Naive thymus-derived CD4-positive, alpha-beta T cell (primary cell): ENCODE measurements at regions of chr2 and their contacts with region 1.

Region 1: DNA sequence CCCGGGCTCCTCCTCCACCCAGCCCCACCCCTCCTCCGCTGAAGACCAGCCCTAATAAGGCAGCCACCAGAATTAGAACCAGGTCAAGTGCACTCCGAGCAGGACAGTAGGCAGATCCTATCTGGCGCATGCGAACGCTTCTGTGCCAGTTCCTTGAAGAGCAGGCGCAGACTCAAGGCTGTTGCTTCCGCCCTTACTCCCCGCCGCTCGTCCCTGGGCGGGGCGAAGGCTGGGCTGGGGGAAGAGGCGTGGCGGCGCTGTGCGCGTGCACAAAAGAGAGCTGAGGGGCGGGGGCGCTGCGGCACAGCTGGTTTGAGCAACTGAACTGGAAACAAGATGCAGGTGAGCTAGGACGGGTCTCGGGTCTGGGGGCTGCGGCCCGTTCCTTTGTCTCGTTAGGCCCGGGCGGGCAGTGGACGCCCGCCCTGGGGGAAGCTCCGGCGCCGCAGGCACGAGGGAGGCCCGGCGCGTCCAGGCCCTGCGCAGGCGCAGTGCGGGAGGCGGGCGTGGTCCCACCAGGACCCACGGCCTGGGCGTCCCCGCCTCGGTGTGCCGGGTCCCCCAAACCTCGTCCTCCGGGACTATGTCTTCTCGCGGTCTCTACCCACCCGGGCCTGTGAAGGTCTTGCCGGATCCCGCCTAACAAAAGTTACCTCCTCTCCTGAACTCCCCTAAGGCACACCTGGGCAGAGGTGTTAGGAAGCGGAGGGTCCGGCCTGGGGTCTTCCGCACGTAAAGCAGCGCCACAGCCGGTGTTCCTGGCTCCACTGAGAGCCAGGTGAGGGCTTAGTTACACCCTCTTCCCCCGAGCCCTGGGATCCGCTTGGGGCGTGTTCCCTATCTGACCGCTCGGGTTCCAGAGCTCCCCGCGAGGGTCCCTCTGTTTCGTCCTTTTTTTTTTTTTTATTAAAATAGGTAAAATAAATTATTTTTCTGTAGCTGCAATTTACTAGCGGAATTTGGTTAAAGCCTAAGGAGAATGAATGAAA is at the start of gene PDCL3:
- DNase-seq: peak; percentile 91 to 97 (median 96)
- ATAC-seq: peak; percentile 94
- H3K4me3 ChIP-seq: peak within 1 kb of the TSS; percentile 99
- H3K4me3 Mint-ChIP-seq: peak within 1 kb of the TSS; percentile 85 to 100 (median 97)
- H3K27ac ChIP-seq: peak within 1 kb of the TSS; percentile 78
- H3K27ac Mint-ChIP-seq: peak within 1 kb of the TSS; percentile 97 to 99 (median 99)
- H3K4me1 ChIP-seq: peaks cover 15 to 16% of the 10 kb centered on the region in 2 donors
- H3K4me1 Mint-ChIP-seq: peaks cover 14 to 64% (median 52%) of the 10 kb centered on the region in 7 donors
- H3K27me3 ChIP-seq: no peaks in the 10 kb centered on the region
- H3K27me3 Mint-ChIP-seq: peaks cover 0 to 2% (median 0%) of the 10 kb centered on the region in 5 donors
- total RNA-seq, gene PDCL3: 16.6 to 31.9 (median 19.9) TPM

Region 2: DNA sequence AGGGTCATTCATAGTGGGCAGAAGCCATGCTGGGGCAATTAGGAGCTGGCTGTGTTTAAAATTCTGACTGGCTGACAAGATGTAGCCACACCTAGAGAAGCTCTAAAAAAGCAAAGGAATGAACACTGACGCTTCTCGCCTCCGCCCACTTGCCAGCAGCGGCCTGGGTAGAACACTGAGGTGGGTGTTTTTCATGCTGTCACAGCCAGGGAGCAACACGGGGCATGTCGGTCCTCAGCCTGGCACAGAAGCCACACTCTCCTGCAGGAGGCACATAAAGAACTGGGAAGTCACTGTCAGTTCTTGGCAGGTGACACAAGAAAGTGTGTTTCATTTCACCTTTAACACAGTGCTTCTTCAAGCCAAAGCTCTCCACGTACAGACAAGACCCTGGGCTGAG is 155.9 kb before region 1 on chr2:
- CTCF ChIA-PET with region 1: no interaction called
- POLR2A ChIA-PET with region 1: no interaction called
- intact Hi-C with region 1: no loop called
- DNase-seq: no peak
- ATAC-seq: no peak
- H3K4me3 ChIP-seq: no peak overlapping the region
- H3K4me3 Mint-ChIP-seq: no peak overlapping the region
- H3K27ac ChIP-seq: no peak overlapping the region
- H3K27ac Mint-ChIP-seq: no peak overlapping the region
- H3K4me1 ChIP-seq: no peaks in the 10 kb centered on the region
- H3K4me1 Mint-ChIP-seq: peaks cover 0 to 3% (median 0%) of the 10 kb centered on the region in 7 donors
- H3K27me3 ChIP-seq: no peaks in the 10 kb centered on the region
- H3K27me3 Mint-ChIP-seq: no peaks in the 10 kb centered on the region

Region 3: DNA sequence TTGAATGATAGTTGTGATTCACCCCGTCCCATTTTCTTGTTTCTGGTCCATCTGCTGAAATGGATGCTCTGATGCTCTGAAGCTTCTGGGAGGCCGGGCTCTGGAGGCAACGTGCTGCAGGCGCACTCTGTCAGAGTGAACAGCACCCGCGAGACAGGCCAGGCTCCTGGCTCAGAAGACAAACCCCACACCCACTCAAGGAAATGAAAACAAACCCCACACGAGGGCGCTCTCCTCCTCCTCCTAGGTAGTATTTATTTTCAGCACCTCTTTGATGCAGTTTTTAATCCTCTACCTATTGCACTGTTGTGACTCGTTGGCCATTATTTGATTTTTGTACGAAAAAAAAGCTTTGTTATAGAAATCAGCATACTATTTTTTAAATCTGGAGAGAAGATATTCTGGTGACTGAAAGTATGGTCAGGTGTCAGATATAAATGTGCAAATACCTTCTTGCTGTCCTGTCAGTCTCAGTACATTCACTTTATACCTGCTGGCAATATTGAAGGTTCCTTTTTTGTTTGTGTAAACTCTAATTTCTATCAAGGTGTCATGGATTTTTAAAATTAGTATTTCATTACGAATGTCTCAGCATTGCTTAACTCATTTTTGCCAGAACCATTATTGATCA is 135.3 kb before region 1 on chr2:
- CTCF ChIA-PET with region 1: no interaction called
- POLR2A ChIA-PET with region 1: interaction called, 3 read pairs
- intact Hi-C with region 1: loop called (anchors 1 to 2 kb)
- DNase-seq: peak; percentile 39 to 64 (median 60)
- ATAC-seq: peak; percentile 92
- H3K4me3 ChIP-seq: no peak overlapping the region
- H3K4me3 Mint-ChIP-seq: no peak overlapping the region
- H3K27ac ChIP-seq: no peak overlapping the region
- H3K27ac Mint-ChIP-seq: peak overlapping the region in 2 of 9 donors; percentile 48 to 58
- H3K4me1 ChIP-seq: no peaks in the 10 kb centered on the region
- H3K4me1 Mint-ChIP-seq: peaks cover 6 to 12% (median 7%) of the 10 kb centered on the region in 7 donors
- H3K27me3 ChIP-seq: no peaks in the 10 kb centered on the region
- H3K27me3 Mint-ChIP-seq: peaks cover 0 to 42% (median 8%) of the 10 kb centered on the region in 5 donors

Region 4: DNA sequence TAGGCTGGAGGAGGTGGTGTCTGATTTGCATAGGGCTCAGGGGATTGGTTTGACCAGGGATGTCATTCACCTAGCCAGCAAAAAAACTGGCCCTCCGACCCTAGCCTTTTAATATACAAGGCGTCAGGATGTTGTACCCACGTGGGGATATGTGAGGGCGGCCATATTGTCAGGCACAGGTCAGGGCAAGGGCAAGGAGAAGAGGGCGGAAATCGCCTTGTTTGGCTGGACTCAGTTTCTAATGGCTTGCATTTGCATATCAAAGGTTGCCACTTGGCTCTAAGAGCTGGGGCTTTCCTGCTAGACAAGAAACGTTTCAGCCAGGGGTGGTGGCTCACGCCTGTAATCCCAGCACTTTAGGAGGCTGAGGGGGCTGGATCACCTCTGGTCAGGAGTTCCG is 25.1 kb before region 1 on chr2:
- CTCF ChIA-PET with region 1: no interaction called
- POLR2A ChIA-PET with region 1: no interaction called
- intact Hi-C with region 1: no loop called
- DNase-seq: no peak
- ATAC-seq: no peak
- H3K4me3 ChIP-seq: no peak overlapping the region
- H3K4me3 Mint-ChIP-seq: no peak overlapping the region
- H3K27ac ChIP-seq: no peak overlapping the region
- H3K27ac Mint-ChIP-seq: peak overlapping the region in 1 of 9 donors; percentile 64
- H3K4me1 ChIP-seq: no peaks in the 10 kb centered on the region
- H3K4me1 Mint-ChIP-seq: peaks cover 0 to 6% (median 0%) of the 10 kb centered on the region in 7 donors
- H3K27me3 ChIP-seq: no peaks in the 10 kb centered on the region
- H3K27me3 Mint-ChIP-seq: peaks cover 0 to 5% (median 0%) of the 10 kb centered on the region in 5 donors

Region 5: DNA sequence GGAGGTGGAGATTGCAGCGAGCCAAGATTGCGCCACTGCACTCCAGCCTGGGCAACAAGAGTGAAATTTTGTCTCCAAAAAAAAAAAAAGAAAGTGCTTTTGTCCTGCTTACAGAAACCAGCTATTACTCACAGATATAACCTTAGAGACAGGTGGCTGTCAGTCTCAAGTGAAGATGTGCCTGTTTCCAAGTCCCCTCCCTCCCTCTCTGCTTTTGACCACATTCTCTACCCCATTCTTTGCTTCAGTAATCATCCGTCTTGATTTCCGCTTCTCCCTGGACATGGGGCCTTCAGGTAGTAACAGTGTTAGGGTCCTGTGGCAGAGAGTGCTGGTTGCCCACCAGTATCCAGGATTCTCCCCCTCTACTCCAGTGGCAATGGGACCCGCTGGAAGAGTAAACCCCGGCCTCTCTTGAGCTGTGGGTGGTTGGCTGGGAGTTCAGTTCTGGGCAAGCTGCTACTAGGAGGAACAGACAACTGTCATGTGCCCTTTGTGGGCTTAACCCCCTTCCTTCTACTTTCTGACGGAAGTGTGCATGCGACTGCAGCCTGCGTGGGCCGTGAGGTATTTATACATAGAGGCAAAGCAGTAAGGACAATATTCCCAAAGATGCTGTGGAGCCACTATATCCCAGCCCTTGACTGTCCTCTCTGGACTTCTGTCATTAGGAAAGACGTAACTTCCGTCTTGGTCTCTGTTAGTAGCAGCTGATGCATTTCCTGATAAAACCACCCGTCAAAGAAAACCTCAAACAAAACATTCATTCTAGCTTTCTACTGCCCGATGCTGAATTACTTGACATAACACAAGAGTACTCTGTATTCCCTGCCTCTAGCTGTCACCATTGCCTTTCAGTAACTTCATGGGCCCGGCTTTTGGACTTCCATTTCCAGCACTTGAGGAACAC is 17.6 kb after region 1 on chr2:
- CTCF ChIA-PET with region 1: interaction called, 8 read pairs
- POLR2A ChIA-PET with region 1: interaction called, 82 read pairs
- intact Hi-C with region 1: loop called (anchors 1 kb)
- DNase-seq: peak; percentile 43 to 83 (median 80)
- ATAC-seq: peak; percentile 89
- H3K4me3 ChIP-seq: peak overlapping the region; percentile 45
- H3K4me3 Mint-ChIP-seq: peak overlapping the region; percentile 33 to 81 (median 62)
- H3K27ac ChIP-seq: peak overlapping the region; percentile 91
- H3K27ac Mint-ChIP-seq: peak overlapping the region; percentile 86 to 99 (median 94)
- H3K4me1 ChIP-seq: peaks cover 31 to 37% of the 10 kb centered on the region in 2 donors
- H3K4me1 Mint-ChIP-seq: peaks cover 24 to 50% (median 42%) of the 10 kb centered on the region in 7 donors
- H3K27me3 ChIP-seq: no peaks in the 10 kb centered on the region
- H3K27me3 Mint-ChIP-seq: no peaks in the 10 kb centered on the region

Region 6: DNA sequence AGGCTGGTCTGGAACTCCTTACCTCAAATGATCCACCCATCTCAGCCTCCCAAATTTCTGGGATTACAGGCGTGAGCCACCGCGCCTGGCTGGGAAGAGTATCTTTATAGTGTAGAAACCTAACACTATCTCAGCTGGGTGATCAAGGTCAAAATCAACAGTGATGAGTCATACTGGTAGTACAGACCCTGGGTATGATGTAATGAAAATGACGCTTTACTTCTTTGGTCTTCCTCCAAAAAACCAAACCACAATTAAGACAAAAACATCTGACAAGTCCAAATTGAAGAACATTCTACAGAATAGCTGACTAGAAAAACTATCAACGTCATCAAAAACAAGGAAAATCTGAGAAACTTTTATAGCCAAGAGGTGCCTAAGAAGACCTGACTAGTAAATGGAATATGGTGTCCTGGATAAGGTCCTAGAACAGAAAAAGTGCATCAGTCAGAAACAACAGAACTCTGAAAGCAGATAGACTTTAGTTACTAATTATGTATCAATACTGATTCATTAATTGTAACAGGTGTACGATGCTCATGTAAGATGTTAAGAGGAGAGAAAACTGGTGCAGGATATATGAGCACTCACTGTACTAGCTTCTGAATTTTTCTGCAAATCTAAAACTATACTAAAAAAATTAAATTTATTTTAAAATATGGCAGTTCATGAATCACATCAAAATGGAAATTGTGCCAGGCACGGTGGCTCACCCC is 25.2 kb after region 1 on chr2:
- CTCF ChIA-PET with region 1: no interaction called
- POLR2A ChIA-PET with region 1: interaction called, 82 read pairs
- intact Hi-C with region 1: loop called (anchors 1 kb)
- DNase-seq: peak in 7 of 9 donors; percentile 21 to 69 (median 58)
- ATAC-seq: peak; percentile 94
- H3K4me3 ChIP-seq: no peak overlapping the region
- H3K4me3 Mint-ChIP-seq: peak overlapping the region in 2 of 10 donors; percentile 13 to 60
- H3K27ac ChIP-seq: no peak overlapping the region
- H3K27ac Mint-ChIP-seq: peak overlapping the region in 8 of 9 donors; percentile 1 to 72 (median 32)
- H3K4me1 ChIP-seq: peaks cover 7 to 16% of the 10 kb centered on the region in 2 donors
- H3K4me1 Mint-ChIP-seq: peaks cover 17 to 51% (median 30%) of the 10 kb centered on the region in 7 donors
- H3K27me3 ChIP-seq: no peaks in the 10 kb centered on the region
- H3K27me3 Mint-ChIP-seq: peaks cover 0 to 11% (median 0%) of the 10 kb centered on the region in 5 donors

Region 7: GRCh38 chr2:101080211-101081068 is 517.4 kb after region 1 on chr2:
- CTCF ChIA-PET with region 1: no interaction called
- POLR2A ChIA-PET with region 1: no interaction called
- intact Hi-C with region 1: no loop called
- DNase-seq: no peak
- ATAC-seq: no peak
- H3K4me3 ChIP-seq: no peak overlapping the region
- H3K4me3 Mint-ChIP-seq: no peak overlapping the region
- H3K27ac ChIP-seq: no peak overlapping the region
- H3K27ac Mint-ChIP-seq: no peak overlapping the region
- H3K4me1 ChIP-seq: no peaks in the 10 kb centered on the region
- H3K4me1 Mint-ChIP-seq: no peaks in the 10 kb centered on the region
- H3K27me3 ChIP-seq: no peaks in the 10 kb centered on the region
- H3K27me3 Mint-ChIP-seq: peaks cover 0 to 2% (median 0%) of the 10 kb centered on the region in 5 donors